IMR-90 (cell line): ENCODE measurements at regions of chr3 and their contacts with region 1.

Region 1: GRCh38 chr3:142947799-142948575 is 15.5 kb downstream of the PAQR9 start:
- DNase-seq: peak; percentile 6
- ATAC-seq: no peak
- H3K4me3 ChIP-seq: no peak overlapping the region
- H3K27ac ChIP-seq: no peak overlapping the region
- H3K4me1 ChIP-seq: no peaks in the 10 kb centered on the region
- H3K27me3 ChIP-seq: peaks cover 17% of the 10 kb centered on the region
- CTCF ChIP-seq: no peak
- POLR2A ChIP-seq: no peak
- RAD21 ChIP-seq: no peak

Region 2: DNA sequence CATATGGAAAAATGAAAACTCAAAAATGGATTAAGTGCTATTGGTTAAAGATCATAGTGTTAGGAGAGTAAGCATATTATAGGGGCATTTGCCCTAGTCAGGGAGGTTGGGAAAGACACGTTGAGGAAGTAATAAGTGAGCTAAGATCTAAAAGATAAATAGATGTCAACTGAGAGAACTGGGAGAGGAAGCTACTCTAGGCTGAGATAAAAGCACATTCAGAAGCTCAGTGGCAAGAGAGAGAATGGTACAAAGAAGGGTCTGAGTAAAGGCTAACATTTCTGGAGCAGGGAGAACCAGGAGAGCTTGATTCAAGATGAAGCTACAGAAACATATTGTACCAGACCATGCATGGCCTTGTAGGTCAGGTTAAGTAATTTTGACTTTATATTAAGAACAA is 160.3 kb before region 1 on chr3:
- CTCF ChIA-PET with region 1: no interaction called
- POLR2A ChIA-PET with region 1: no interaction called
- dilution Hi-C with region 1: no loop called
- in situ Hi-C with region 1: no loop called
- intact Hi-C with region 1: no loop called
- DNase-seq: no peak
- ATAC-seq: no peak
- H3K4me3 ChIP-seq: no peak overlapping the region
- H3K27ac ChIP-seq: no peak overlapping the region
- H3K4me1 ChIP-seq: no peaks in the 10 kb centered on the region
- H3K27me3 ChIP-seq: no peaks in the 10 kb centered on the region
- CTCF ChIP-seq: no peak
- POLR2A ChIP-seq: no peak
- RAD21 ChIP-seq: no peak

Region 3: DNA sequence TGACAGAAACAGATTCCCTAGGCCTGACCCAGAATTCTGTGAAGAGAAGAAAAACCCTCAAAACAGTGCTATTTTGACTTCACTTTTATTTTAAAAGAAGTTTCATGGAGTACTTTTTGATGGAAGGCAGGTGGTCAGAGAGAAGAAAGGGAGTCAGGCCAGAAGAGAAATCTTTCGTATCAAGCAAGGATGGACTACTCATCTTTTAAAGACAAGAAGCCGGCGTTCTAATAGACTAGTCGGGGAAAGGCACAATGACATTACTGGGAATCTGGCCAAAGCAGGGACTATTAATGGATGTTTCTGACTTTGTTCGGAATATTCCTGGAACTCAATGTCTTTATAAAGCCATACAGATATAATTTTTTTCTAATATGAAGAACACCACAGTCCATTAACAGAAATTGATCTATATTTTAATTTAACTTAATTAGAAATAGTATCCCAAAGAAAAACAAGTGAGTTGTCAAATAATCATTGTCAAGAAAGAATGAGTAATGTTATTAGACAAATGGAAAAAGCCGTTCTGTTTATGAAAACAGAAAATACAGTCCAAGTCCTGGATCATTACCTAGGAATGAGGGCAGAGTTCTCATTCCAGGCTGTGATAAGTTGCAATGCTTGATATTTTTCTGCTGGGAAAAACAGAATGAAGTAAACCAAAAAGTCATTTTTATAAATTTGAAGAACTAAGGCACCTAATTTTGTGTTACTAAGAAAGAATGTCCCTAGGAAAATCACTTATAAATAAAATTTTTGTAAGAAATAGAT is 35.4 kb before region 1 on chr3:
- CTCF ChIA-PET with region 1: no interaction called
- POLR2A ChIA-PET with region 1: no interaction called
- dilution Hi-C with region 1: no loop called
- in situ Hi-C with region 1: no loop called
- intact Hi-C with region 1: no loop called
- DNase-seq: no peak
- ATAC-seq: no peak
- H3K4me3 ChIP-seq: no peak overlapping the region
- H3K27ac ChIP-seq: no peak overlapping the region
- H3K4me1 ChIP-seq: no peaks in the 10 kb centered on the region
- H3K27me3 ChIP-seq: peaks cover 5% of the 10 kb centered on the region
- CTCF ChIP-seq: no peak
- POLR2A ChIP-seq: no peak
- RAD21 ChIP-seq: no peak

Region 4: DNA sequence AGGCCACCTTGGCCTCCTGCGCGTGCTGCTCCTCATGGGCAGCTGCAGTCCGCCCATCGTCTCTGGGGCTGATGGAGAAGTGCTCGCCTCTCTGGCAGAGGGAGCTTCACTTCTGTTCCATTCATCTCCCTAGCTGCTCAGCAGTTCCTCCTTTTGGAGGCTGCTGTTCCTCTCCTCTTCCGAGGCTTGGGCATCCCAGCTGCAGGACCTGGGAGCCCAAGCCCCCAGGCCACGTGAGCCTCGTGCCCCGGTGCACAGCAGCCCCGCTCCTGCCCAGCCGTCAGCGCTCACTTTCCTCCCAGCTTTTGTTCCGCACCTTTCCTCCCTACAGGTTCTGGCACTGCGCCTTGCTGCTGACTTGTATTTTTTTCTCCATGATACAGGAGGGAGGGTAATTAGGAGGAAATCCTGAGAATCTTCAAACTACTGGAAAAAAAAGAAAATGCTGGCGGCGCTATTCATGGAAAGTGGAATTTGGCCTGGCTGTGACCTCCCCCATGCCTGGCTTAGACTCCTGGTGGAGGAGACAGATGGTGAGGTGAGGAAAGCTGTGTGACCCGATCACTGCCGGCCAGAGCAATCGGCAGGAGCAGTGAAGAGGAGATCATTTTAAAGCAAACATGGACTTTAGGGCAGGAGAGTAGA is 381.7 kb after region 1 on chr3:
- CTCF ChIA-PET with region 1: no interaction called
- POLR2A ChIA-PET with region 1: no interaction called
- dilution Hi-C with region 1: no loop called
- in situ Hi-C with region 1: no loop called
- intact Hi-C with region 1: no loop called
- DNase-seq: no peak
- ATAC-seq: no peak
- H3K4me3 ChIP-seq: no peak overlapping the region
- H3K27ac ChIP-seq: no peak overlapping the region
- H3K4me1 ChIP-seq: no peaks in the 10 kb centered on the region
- H3K27me3 ChIP-seq: peaks cover 1% of the 10 kb centered on the region; the same call in 1 of the 2 replicates
- CTCF ChIP-seq: no peak
- POLR2A ChIP-seq: no peak
- RAD21 ChIP-seq: no peak

Region 5: GRCh38 chr3:144259267-144259666 is 1311.3 kb after region 1 on chr3:
- CTCF ChIA-PET with region 1: no interaction called
- POLR2A ChIA-PET with region 1: no interaction called
- dilution Hi-C with region 1: no loop called
- in situ Hi-C with region 1: no loop called
- intact Hi-C with region 1: loop called (anchors 10 kb)
- DNase-seq: no peak
- ATAC-seq: no peak
- H3K4me3 ChIP-seq: no peak overlapping the region
- H3K27ac ChIP-seq: no peak overlapping the region
- H3K4me1 ChIP-seq: no peaks in the 10 kb centered on the region
- H3K27me3 ChIP-seq: no peaks in the 10 kb centered on the region
- CTCF ChIP-seq: no peak
- POLR2A ChIP-seq: no peak
- RAD21 ChIP-seq: no peak